Natural killer cell (primary cell): ENCODE measurements at regions of chr5 and their contacts with region 1.

Region 1: GRCh38 chr5:40410231-40410861 is 269.4 kb upstream of the PTGER4 start:
- DNase-seq: peak; percentile 52 to 95
- ATAC-seq: peak; percentile 83 to 92 (median 89)
- H3K4me3 ChIP-seq: no peak overlapping the region
- H3K4me3 Mint-ChIP-seq: peak overlapping the region; percentile 78
- H3K27ac ChIP-seq: peak overlapping the region; percentile 95
- H3K27ac Mint-ChIP-seq: peak overlapping the region; percentile 88 to 95
- H3K4me1 ChIP-seq: peaks cover 33% of the 10 kb centered on the region
- H3K4me1 Mint-ChIP-seq: peaks cover 57 to 62% of the 10 kb centered on the region in 2 donors
- H3K27me3 ChIP-seq: no peaks in the 10 kb centered on the region
- H3K27me3 Mint-ChIP-seq: no peaks in the 10 kb centered on the region
- CTCF ChIP-seq: no peak

Region 2: GRCh38 chr5:40191150-40191549 is 219.2 kb before region 1 on chr5:
- intact Hi-C with region 1: no loop called
- DNase-seq: no peak
- ATAC-seq: no peak
- H3K4me3 ChIP-seq: no peak overlapping the region
- H3K4me3 Mint-ChIP-seq: no peak overlapping the region
- H3K27ac ChIP-seq: no peak overlapping the region
- H3K27ac Mint-ChIP-seq: no peak overlapping the region
- H3K4me1 ChIP-seq: no peaks in the 10 kb centered on the region
- H3K4me1 Mint-ChIP-seq: no peaks in the 10 kb centered on the region
- H3K27me3 ChIP-seq: no peaks in the 10 kb centered on the region
- H3K27me3 Mint-ChIP-seq: peaks cover 0 to 14% of the 10 kb centered on the region in 2 donors
- CTCF ChIP-seq: no peak

Region 3: GRCh38 chr5:40378396-40379177 is 31.8 kb before region 1 on chr5:
- intact Hi-C with region 1: loop called (anchors 2 kb)
- DNase-seq: peak in 1 of 2 donors; percentile 68
- ATAC-seq: peak; percentile 79 to 88 (median 80)
- H3K4me3 ChIP-seq: no peak overlapping the region
- H3K4me3 Mint-ChIP-seq: peak overlapping the region; percentile 43
- H3K27ac ChIP-seq: peak overlapping the region; percentile 73
- H3K27ac Mint-ChIP-seq: peak overlapping the region; percentile 79 to 90
- H3K4me1 ChIP-seq: peaks cover 11% of the 10 kb centered on the region
- H3K4me1 Mint-ChIP-seq: peaks cover 29 to 31% of the 10 kb centered on the region in 2 donors
- H3K27me3 ChIP-seq: no peaks in the 10 kb centered on the region
- H3K27me3 Mint-ChIP-seq: peaks cover 0 to 6% of the 10 kb centered on the region in 2 donors
- CTCF ChIP-seq: no peak

Region 4: GRCh38 chr5:40386289-40386688 is 24.1 kb before region 1 on chr5:
- intact Hi-C with region 1: loop called (anchors 2 kb)
- DNase-seq: peak; percentile 34 to 68
- ATAC-seq: peak; percentile 79 to 84 (median 82)
- H3K4me3 ChIP-seq: no peak overlapping the region
- H3K4me3 Mint-ChIP-seq: peak overlapping the region; percentile 61
- H3K27ac ChIP-seq: peak overlapping the region; percentile 34
- H3K27ac Mint-ChIP-seq: peak overlapping the region; percentile 75 to 86
- H3K4me1 ChIP-seq: peaks cover 26% of the 10 kb centered on the region
- H3K4me1 Mint-ChIP-seq: peaks cover 75 to 78% of the 10 kb centered on the region in 2 donors
- H3K27me3 ChIP-seq: no peaks in the 10 kb centered on the region
- H3K27me3 Mint-ChIP-seq: no peaks in the 10 kb centered on the region
- CTCF ChIP-seq: no peak

Region 5: GRCh38 chr5:40428126-40428525 is 17.8 kb after region 1 on chr5:
- intact Hi-C with region 1: loop called (anchors 2 kb)
- DNase-seq: peak in 1 of 2 donors; percentile 51
- ATAC-seq: peak; percentile 88 to 96 (median 94)
- H3K4me3 ChIP-seq: no peak overlapping the region
- H3K4me3 Mint-ChIP-seq: peak overlapping the region; percentile 41
- H3K27ac ChIP-seq: no peak overlapping the region
- H3K27ac Mint-ChIP-seq: peak overlapping the region; percentile 65 to 90
- H3K4me1 ChIP-seq: peaks cover 6% of the 10 kb centered on the region
- H3K4me1 Mint-ChIP-seq: peaks cover 43 to 47% of the 10 kb centered on the region in 2 donors
- H3K27me3 ChIP-seq: no peaks in the 10 kb centered on the region
- H3K27me3 Mint-ChIP-seq: no peaks in the 10 kb centered on the region
- CTCF ChIP-seq: no peak

Region 6: GRCh38 chr5:40446910-40447309 is 36.6 kb after region 1 on chr5:
- intact Hi-C with region 1: no loop called
- DNase-seq: no peak
- ATAC-seq: no peak
- H3K4me3 ChIP-seq: no peak overlapping the region
- H3K4me3 Mint-ChIP-seq: no peak overlapping the region
- H3K27ac ChIP-seq: no peak overlapping the region
- H3K27ac Mint-ChIP-seq: no peak overlapping the region
- H3K4me1 ChIP-seq: peaks cover 2% of the 10 kb centered on the region
- H3K4me1 Mint-ChIP-seq: peaks cover 14 to 20% of the 10 kb centered on the region in 2 donors
- H3K27me3 ChIP-seq: no peaks in the 10 kb centered on the region
- H3K27me3 Mint-ChIP-seq: no peaks in the 10 kb centered on the region
- CTCF ChIP-seq: no peak